CD8-positive, alpha-beta memory T cell (primary cell): ENCODE measurements at regions of chr22 and their contacts with region 1.

Region 1: GRCh38 chr22:22748297-22748743 is 103.9 kb downstream of the GGTLC2 start:
- DNase-seq: peak in 2 of 5 donors; percentile 27 to 66
- H3K4me3 ChIP-seq: no peak overlapping the region
- H3K4me3 Mint-ChIP-seq: peak overlapping the region in 4 of 7 donors; percentile 33 to 59 (median 54)
- H3K27ac ChIP-seq: no peak overlapping the region
- H3K27ac Mint-ChIP-seq: peak overlapping the region in 7 of 8 donors; percentile 6 to 87 (median 67)
- H3K4me1 ChIP-seq: peaks cover 16% of the 10 kb centered on the region
- H3K4me1 Mint-ChIP-seq: peaks cover 56 to 62% (median 57%) of the 10 kb centered on the region in 3 donors
- H3K27me3 ChIP-seq: no peaks in the 10 kb centered on the region
- H3K27me3 Mint-ChIP-seq: peaks cover 2 to 3% of the 10 kb centered on the region in 2 donors

Region 2: GRCh38 chr22:22733881-22734373 is 14.4 kb before region 1 on chr22:
- CTCF ChIA-PET with region 1: interaction called, 17 read pairs
- POLR2A ChIA-PET with region 1: no interaction called
- DNase-seq: no peak
- H3K4me3 ChIP-seq: no peak overlapping the region
- H3K4me3 Mint-ChIP-seq: peak overlapping the region in 5 of 7 donors; percentile 48 to 82 (median 75)
- H3K27ac ChIP-seq: no peak overlapping the region
- H3K27ac Mint-ChIP-seq: peak overlapping the region; percentile 17 to 97 (median 76)
- H3K4me1 ChIP-seq: peaks cover 36% of the 10 kb centered on the region
- H3K4me1 Mint-ChIP-seq: peaks cover 79 to 93% (median 81%) of the 10 kb centered on the region in 3 donors
- H3K27me3 ChIP-seq: no peaks in the 10 kb centered on the region
- H3K27me3 Mint-ChIP-seq: no peaks in the 10 kb centered on the region

Region 3: DNA sequence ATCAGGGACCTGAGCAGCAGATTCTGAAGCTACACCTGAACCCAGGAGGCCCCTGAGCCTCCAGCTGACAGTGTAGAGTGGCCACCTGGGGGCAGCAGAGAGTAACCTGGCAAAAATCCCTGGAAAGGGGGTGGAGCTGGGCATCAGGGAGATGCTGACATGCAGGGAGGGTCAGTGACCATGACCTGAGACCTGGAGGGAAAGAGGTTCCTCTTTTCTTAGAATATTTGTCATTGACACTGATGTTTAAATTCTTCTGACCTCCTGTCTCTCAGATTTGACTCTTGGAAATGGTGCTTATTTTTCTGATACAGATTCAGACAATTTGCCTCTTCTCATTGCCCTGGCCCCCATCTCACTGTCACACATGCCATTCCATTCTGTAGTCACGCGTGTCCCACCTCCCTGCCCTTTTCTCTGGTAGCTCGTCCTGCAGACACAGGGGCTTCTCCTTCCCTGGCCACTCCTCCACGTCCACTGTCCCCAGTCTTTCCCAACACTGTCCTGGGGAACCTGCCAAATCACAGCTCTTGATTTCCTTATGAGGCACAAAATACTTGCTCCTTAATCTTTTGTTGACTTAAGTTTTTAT is 22.1 kb after region 1 on chr22:
- CTCF ChIA-PET with region 1: interaction called, 107 read pairs
- POLR2A ChIA-PET with region 1: interaction called, 5 read pairs
- DNase-seq: peak; percentile 25 to 62 (median 31)
- H3K4me3 ChIP-seq: no peak overlapping the region
- H3K4me3 Mint-ChIP-seq: peak overlapping the region in 2 of 7 donors; percentile 0 to 15
- H3K27ac ChIP-seq: no peak overlapping the region
- H3K27ac Mint-ChIP-seq: peak overlapping the region; percentile 76 to 91 (median 84)
- H3K4me1 ChIP-seq: peaks cover 4% of the 10 kb centered on the region
- H3K4me1 Mint-ChIP-seq: peaks cover 72 to 97% (median 84%) of the 10 kb centered on the region in 3 donors
- H3K27me3 ChIP-seq: no peaks in the 10 kb centered on the region
- H3K27me3 Mint-ChIP-seq: no peaks in the 10 kb centered on the region

Region 4: DNA sequence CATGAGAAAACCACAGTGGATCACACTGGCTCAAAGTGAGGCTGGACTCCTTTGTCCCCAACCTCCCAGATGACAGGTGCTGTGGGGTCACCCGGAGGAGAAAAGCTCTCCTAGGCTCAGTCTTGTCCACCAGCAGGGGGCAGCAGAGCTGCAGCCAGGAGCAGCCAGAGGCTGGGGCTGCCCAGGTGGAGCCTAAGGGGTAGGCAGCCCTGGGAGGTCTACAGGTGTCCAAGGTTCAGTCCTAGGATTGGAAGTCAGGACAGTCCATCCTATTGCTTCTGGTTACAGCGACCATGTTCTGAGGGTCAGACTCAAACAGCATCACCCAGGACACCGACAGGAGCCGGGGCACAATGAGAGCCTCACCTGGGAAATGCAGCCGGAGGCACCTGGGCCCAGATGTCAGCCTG is 61.7 kb after region 1 on chr22:
- CTCF ChIA-PET with region 1: interaction called, 194 read pairs
- POLR2A ChIA-PET with region 1: interaction called, 8 read pairs
- DNase-seq: peak; percentile 58 to 88 (median 74)
- H3K4me3 ChIP-seq: no peak overlapping the region
- H3K4me3 Mint-ChIP-seq: peak overlapping the region in 6 of 7 donors; percentile 60 to 87 (median 82)
- H3K27ac ChIP-seq: no peak overlapping the region
- H3K27ac Mint-ChIP-seq: peak overlapping the region; percentile 82 to 97 (median 88)
- H3K4me1 ChIP-seq: peaks cover 18% of the 10 kb centered on the region
- H3K4me1 Mint-ChIP-seq: peaks cover 86 to 94% (median 92%) of the 10 kb centered on the region in 3 donors
- H3K27me3 ChIP-seq: no peaks in the 10 kb centered on the region
- H3K27me3 Mint-ChIP-seq: no peaks in the 10 kb centered on the region

Region 5: DNA sequence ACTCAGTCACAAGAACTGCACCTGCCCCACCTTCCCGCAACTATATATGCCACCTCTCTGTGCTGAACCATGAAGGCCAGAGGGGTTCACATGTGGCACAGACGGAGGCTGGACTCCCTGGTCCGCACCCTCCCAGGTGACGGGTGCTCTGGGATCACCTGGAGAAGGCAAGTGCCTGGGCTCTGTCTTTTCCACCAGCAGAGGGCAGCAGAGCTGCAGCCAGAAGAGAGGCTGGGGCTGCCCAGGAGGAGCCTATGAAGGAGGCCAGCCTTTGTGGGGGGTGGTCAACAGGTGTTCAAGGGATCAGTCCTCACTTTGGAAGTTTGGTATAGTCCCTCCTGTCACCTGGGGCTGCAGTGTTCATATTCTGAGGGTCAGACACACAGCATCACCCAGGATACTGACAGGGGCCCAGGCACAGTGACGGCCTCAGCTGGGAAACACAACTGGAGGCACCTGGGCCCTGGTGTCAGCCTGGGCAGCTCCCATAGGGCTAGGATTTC is 100.1 kb after region 1 on chr22:
- CTCF ChIA-PET with region 1: interaction called, 37 read pairs
- POLR2A ChIA-PET with region 1: no interaction called
- DNase-seq: peak; percentile 49 to 83 (median 59)
- H3K4me3 ChIP-seq: no peak overlapping the region
- H3K4me3 Mint-ChIP-seq: peak overlapping the region in 3 of 7 donors; percentile 27 to 74 (median 38)
- H3K27ac ChIP-seq: no peak overlapping the region
- H3K27ac Mint-ChIP-seq: peak overlapping the region in 4 of 8 donors; percentile 47 to 67 (median 66)
- H3K4me1 ChIP-seq: peaks cover 10% of the 10 kb centered on the region
- H3K4me1 Mint-ChIP-seq: peaks cover 56 to 67% (median 65%) of the 10 kb centered on the region in 3 donors
- H3K27me3 ChIP-seq: no peaks in the 10 kb centered on the region
- H3K27me3 Mint-ChIP-seq: no peaks in the 10 kb centered on the region

Region 6: GRCh38 chr22:22903355-22903777 is 155.0 kb after region 1 on chr22:
- CTCF ChIA-PET with region 1: no interaction called
- POLR2A ChIA-PET with region 1: no interaction called
- DNase-seq: no peak
- H3K4me3 ChIP-seq: no peak overlapping the region
- H3K4me3 Mint-ChIP-seq: no peak overlapping the region
- H3K27ac ChIP-seq: no peak overlapping the region
- H3K27ac Mint-ChIP-seq: no peak overlapping the region
- H3K4me1 ChIP-seq: no peaks in the 10 kb centered on the region
- H3K4me1 Mint-ChIP-seq: no peaks in the 10 kb centered on the region
- H3K27me3 ChIP-seq: no peaks in the 10 kb centered on the region
- H3K27me3 Mint-ChIP-seq: peaks cover 1 to 12% of the 10 kb centered on the region in 2 donors

Region 7: GRCh38 chr22:22942511-22943329 is 194.4 kb after region 1 on chr22:
- CTCF ChIA-PET with region 1: interaction called, 11 read pairs
- POLR2A ChIA-PET with region 1: no interaction called
- DNase-seq: peak; percentile 34 to 84 (median 70)
- H3K4me3 ChIP-seq: no peak overlapping the region
- H3K4me3 Mint-ChIP-seq: no peak overlapping the region
- H3K27ac ChIP-seq: no peak overlapping the region
- H3K27ac Mint-ChIP-seq: peak overlapping the region in 3 of 8 donors; percentile 14 to 77 (median 30)
- H3K4me1 ChIP-seq: no peaks in the 10 kb centered on the region
- H3K4me1 Mint-ChIP-seq: peaks cover 2 to 11% (median 5%) of the 10 kb centered on the region in 3 donors
- H3K27me3 ChIP-seq: no peaks in the 10 kb centered on the region
- H3K27me3 Mint-ChIP-seq: no peaks in the 10 kb centered on the region